ENCODE measurements at regions of chr19 and their contacts with region 1.

Region 1: DNA sequence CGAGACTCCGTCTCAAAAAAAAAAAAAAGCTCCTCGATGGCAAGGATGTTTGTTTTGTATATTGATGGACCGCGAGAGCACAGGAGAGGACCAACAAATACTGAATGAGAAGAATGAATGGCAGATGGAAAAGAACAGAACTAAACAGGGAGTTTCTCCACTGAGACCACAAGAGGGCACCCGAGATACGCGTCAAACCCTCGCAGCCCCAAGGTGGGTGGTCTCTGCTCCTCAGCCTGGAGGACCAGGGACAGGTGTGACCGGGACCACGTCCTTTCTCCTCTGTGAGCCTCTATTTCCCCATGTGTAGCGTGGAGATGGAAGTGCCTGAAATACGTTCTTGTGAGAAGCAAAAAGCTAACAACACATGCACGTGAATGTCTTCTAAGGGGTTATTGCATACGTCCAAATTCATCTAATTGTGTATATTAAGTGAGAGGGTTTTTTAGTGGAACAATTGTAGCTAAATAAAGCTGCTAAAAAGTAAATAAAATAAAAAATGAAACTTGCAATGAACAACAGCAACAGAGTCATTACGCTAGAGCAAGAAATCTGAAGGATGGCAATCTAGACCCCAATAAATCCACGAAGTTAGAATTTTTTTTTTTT is 8.3 kb upstream of the CDC42EP5 start:
- H3K4me3 ChIP-seq: no peak overlapping the region
- H3K27ac ChIP-seq: no peak overlapping the region
- H3K4me1 ChIP-seq: no peaks in the 10 kb centered on the region
- CTCF ChIP-seq: peak; percentile 67

Region 2: GRCh38 chr19:54448774-54449700 is 32.4 kb before region 1 on chr19 and contains the start of gene LENG8:
- CTCF ChIA-PET with region 1: interaction called, 10 read pairs
- POLR2A ChIA-PET with region 1: interaction called, 6 read pairs
- H3K4me3 ChIP-seq: peak within 1 kb of the TSS; percentile 96
- H3K27ac ChIP-seq: peak within 1 kb of the TSS; percentile 90
- H3K4me1 ChIP-seq: peaks cover 29% of the 10 kb centered on the region
- CTCF ChIP-seq: peak; percentile 23; the same call in 1 of the 2 replicates

Region 3: DNA sequence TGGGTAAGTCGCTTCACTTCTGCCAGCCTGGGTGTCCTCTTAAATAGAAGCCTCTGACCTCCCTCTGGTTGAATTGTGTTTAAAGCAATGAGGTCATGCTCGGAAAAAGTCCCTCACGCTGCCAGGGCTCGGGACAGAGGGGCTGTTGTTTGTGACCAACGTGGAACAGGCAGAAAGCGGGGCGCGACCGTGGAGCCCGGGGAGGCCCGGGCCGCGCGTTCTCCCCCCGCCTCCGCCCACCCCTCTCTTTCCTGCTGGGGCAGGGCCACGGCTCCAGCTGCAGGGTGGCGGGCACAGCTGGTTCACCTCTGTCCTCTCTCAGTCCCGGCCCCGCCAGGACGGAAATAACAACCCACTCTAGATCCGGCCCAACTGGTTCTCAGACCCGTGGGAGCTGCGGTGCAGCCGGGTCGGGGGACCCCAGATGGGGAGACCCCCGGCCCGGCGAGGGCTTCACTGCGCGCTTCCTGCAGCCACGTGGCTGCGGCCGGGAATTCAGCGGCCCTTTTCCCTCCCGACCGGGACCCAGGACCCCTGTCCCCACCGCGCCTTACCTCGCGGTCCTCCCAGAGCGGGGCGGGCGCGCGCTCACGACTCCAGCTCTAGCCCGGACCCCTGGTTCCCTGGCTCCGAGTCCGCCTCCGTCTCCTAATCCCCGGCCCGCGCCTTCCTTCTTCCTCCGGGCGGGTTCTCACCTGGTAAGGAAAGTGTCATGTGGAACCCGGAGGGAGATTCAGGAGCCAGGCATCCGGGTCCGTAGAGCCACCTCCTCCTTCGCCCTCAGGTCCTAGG is 10.2 kb before region 1 on chr19:
- CTCF ChIA-PET with region 1: interaction called, 34 read pairs
- POLR2A ChIA-PET with region 1: interaction called, 3 read pairs
- H3K4me3 ChIP-seq: no peak overlapping the region
- H3K27ac ChIP-seq: no peak overlapping the region
- H3K4me1 ChIP-seq: peaks cover 7% of the 10 kb centered on the region; the same call in 1 of the 2 replicates
- CTCF ChIP-seq: no peak

Region 4: GRCh38 chr19:54653181-54653809 is 171.9 kb after region 1 on chr19:
- CTCF ChIA-PET with region 1: interaction called, 25 read pairs
- POLR2A ChIA-PET with region 1: no interaction called
- H3K4me3 ChIP-seq: no peak overlapping the region
- H3K27ac ChIP-seq: no peak overlapping the region
- H3K4me1 ChIP-seq: no peaks in the 10 kb centered on the region
- CTCF ChIP-seq: no peak

Measured in HEK293 (cell line).